Cardiac septum (tissue), 1 donor: ENCODE measurements at regions of chr14 and their contacts with region 1.

Region 1: DNA sequence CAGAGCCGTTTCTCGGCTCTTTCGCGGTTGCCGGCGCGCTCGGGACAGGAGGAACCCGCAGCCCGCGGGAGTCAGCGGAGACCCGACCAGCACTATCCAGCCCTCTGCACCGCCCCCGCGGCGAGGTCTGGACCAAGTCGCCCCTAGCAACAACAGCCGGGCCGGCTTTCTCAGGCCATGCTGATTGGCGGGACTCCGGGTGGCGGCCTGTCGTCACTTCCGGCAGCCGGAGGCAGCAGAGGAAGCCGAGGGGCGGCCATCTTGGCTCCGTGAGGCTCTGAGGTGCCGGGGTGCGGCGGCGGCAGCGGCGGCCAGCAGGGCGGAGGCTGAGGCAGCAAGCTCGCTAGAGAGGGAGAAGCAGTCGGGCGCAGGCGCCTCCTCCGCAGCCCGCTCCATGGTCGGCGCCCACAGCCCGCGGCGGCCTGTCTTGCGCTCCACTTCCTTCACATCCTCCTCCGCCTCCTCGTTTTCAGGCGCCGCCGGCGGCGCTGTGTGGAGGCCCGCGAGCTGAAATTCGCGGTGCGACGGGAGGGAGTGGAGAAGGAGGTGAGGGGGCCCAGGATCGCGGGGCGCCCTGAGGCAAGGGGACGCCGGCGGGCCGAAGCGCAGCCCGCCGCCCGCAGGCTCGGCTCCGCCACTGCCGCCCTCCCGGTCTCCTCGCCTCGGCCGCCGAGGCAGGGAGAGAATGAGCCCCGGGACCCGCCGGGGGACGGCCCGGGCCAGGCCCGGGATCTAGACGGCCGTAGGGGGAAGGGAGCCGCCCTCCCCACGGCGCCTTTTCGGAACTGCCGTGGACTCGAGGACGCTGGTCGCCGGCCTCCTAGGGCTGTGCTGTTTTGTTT is at the start of gene MARK3:
- DNase-seq: peak; percentile 99
- total RNA-seq, gene MARK3: 69.4 TPM

Region 2: DNA sequence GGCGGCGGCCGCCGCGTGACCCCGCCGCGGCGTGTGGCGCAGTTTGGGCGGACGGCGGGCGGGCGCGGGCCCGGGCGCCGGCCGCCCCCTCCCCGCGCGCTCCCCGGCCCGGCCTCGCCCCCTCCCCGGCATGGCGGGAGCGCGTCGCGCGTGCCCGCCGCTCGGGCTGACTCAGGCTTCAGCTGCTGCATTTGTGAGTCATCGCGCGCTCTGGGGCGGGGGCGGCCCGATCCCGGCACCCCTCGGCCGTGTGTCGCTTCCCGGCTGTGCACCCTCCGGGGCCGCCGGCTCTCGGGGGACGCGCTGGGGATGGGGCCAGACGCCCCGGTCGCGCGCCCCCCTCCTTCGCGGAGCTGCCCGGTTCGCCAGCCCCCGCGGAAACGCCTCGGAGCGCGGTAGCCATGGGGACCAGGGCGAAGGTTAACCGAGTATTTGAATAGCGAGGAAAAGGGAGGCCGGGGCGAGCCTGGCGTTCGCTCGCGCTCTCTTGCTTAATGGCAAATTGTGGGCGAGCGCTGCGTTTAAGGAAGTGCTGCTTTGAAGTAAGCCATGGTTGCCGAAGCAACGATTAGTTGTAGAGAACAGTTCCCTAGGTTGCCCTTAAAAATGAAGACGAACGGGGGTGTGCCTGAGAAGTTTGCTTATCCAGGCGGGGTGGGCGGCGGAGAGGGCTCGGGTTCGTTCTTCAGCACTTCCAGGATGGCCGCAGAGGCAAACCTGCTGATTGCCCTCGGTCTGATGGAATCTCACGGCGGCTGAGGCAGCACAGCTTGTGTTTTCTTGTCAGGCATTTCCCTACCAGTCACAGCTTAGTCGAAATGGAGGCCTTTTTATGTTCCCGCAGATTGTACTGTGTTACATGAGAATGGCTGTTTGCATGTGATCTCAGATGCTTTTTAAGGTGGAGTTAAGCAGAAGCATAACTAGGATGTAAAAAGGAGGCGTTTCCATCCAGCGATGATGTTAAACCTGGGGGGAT is 50.4 kb before region 1 on chr14:
- intact Hi-C with region 1: loop called (anchors 1 kb)
- DNase-seq: peak; percentile 90

Region 3: DNA sequence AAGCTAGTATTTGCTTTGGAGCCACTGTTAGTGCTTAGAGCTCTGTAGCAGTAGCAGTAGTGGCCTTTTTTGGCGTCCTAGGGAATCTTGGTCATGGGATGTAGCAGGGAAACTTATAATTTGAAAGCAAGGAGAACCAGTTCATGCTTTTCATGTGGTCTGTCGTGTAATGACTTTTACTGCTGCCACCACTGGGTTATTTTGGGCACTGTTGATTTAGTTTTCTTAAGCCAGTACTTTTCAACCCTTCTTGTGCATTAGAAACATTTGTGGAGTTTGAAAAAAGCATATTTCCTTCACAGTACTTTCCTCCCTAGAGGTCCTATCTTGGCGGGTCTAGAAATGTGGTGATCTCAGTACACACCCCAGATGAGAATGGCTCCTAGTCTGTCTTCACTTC is 49.6 kb after region 1 on chr14:
- intact Hi-C with region 1: loop called (anchors 5 kb)
- DNase-seq: no peak